HEK293 (cell line): ENCODE measurements at regions of chr12 and their contacts with region 1.

Region 1: DNA sequence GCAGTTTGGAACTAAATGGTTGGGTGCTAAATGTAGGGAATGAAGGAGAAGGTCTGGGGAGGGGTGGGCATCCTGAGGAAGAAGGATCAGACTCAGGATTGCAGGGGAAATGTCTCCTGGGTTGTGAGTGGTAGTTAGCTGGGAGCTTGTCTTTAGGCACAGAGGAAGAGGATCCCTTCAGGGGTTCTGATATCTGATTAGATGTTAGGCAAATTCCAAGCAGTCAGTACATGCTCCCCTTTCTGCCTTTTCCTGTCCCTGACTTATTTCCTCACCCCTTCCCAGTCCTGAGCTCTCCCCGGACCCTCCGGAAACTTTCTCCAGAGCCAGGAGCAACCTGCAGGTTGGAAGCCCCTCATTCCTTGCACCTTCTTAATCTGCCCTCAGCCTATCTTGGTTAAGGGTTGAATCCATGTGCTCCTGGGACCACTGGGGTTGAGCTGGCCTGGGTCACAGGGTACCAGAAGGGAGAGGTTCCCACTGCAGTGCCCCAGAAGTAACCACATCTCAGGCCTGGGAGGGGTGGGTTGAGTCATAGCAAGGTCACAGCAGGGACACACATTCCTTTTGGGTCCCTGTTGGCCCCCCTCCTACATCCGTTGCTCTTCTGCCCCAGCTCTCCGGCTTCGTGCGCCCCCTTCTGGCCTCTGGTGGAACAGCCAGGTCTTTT is 1.6 kb downstream of the IGFBP6 start:
- H3K4me3 ChIP-seq: no peak overlapping the region
- H3K27ac ChIP-seq: no peak overlapping the region
- H3K4me1 ChIP-seq: peaks cover 3% of the 10 kb centered on the region; the same call in 1 of the 2 replicates
- CTCF ChIP-seq: peak; percentile 87

Region 2: GRCh38 chr12:53039851-53040250 is 59.3 kb before region 1 on chr12:
- CTCF ChIA-PET with region 1: interaction called, 14 read pairs
- POLR2A ChIA-PET with region 1: no interaction called
- H3K4me3 ChIP-seq: no peak overlapping the region
- H3K27ac ChIP-seq: no peak overlapping the region
- H3K4me1 ChIP-seq: no peaks in the 10 kb centered on the region
- CTCF ChIP-seq: no peak

Region 3: GRCh38 chr12:53086361-53086760 is 12.8 kb before region 1 on chr12:
- CTCF ChIA-PET with region 1: interaction called, 28 read pairs
- POLR2A ChIA-PET with region 1: no interaction called
- H3K4me3 ChIP-seq: no peak overlapping the region
- H3K27ac ChIP-seq: no peak overlapping the region
- H3K4me1 ChIP-seq: no peaks in the 10 kb centered on the region
- CTCF ChIP-seq: no peak